B cell (primary cell): ENCODE measurements at regions of chrX and their contacts with region 1.

Region 1: GRCh38 chrX:10119399-10119990 is 37.3 kb upstream of the CLCN4 start:
- DNase-seq: peak; percentile 86
- ATAC-seq: peak; percentile 56
- H3K4me3 ChIP-seq: no peak overlapping the region
- H3K4me3 Mint-ChIP-seq: peak overlapping the region; percentile 65
- H3K27ac ChIP-seq: peak overlapping the region in 1 of 2 donors; percentile 55
- H3K27ac Mint-ChIP-seq: peak overlapping the region; percentile 96
- H3K4me1 ChIP-seq: peaks cover 70 to 90% of the 10 kb centered on the region in 2 donors
- H3K4me1 Mint-ChIP-seq: peaks cover 69% of the 10 kb centered on the region
- H3K27me3 ChIP-seq: no peaks in the 10 kb centered on the region
- H3K27me3 Mint-ChIP-seq: no peaks in the 10 kb centered on the region
- CTCF ChIP-seq: peak; percentile 98

Region 2: DNA sequence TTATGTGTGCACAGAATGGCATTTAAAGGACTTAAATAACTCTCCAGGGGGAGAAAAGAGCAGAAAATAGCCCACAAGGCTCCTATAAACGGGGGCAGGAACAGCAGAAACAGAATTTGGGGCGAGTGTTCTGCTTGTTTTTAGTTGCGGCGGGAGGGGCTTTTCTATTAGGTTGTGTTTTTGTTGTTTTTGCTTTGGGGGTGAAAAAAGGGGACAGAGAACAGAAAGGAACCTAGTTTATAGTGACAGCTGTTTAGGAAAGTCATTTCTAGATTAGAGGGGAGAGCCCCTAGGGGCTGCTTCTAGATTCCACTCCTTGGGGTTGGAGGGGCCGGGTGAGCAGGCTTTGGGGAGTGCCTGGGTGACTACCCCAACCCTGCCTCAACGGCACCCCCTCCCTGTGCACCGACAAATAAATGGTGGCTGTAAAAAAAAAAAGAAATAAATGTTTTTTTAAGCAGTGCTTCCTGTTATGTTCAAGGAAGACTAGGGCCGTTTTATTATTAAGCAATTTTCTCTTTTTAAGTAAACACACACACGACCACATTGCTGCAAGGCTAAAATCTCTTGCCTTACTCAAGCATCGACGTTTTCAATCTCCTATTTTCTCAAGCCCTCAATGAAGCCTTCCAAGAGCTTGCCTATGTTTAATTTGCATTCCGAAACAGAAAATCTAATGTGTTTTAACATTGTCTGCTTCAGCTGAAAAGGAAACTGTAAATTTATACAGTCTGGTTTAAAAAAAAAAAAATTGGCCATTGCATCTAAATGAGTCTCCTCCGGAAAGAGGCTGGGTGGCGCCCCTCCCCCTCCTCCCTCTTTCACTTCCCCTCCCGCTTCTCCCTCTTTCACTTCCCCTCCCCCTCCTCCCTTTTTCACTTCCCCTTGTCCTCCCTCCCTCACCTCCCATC is 777.9 kb before region 1 on chrX:
- CTCF ChIA-PET with region 1: interaction called, 3 read pairs
- POLR2A ChIA-PET with region 1: interaction called, 9 read pairs
- intact Hi-C with region 1: loop called (anchors 5 kb)
- DNase-seq: peak; percentile 90
- ATAC-seq: peak; percentile 61
- H3K4me3 ChIP-seq: peak overlapping the region; percentile 30 to 71 (median 47)
- H3K4me3 Mint-ChIP-seq: peak overlapping the region; percentile 84
- H3K27ac ChIP-seq: peak overlapping the region; percentile 83 to 93
- H3K27ac Mint-ChIP-seq: peak overlapping the region; percentile 92
- H3K4me1 ChIP-seq: peaks cover 29 to 33% of the 10 kb centered on the region in 2 donors
- H3K4me1 Mint-ChIP-seq: peaks cover 30% of the 10 kb centered on the region
- H3K27me3 ChIP-seq: no peaks in the 10 kb centered on the region
- H3K27me3 Mint-ChIP-seq: no peaks in the 10 kb centered on the region
- CTCF ChIP-seq: no peak

Region 3: DNA sequence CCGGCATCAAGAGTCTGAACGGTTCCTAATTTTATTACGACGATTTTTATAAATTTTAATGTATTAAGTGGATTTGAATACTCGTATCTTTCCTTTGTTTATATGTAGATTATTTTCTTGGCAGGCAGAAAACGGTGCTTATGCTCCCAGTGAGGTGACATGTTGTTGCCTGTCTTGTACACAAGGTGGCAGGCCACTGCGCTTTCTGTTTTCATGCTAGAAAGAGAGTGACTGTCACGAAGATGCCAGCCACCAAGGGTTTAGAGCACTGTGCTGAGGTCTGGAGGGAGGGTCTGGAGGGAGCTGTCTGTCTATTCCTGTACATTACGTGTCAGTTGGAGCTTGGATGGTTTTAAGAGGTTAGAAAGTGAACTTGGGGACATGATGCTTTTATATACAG is 245.5 kb before region 1 on chrX:
- CTCF ChIA-PET with region 1: interaction called, 7 read pairs
- POLR2A ChIA-PET with region 1: no interaction called
- intact Hi-C with region 1: loop called (anchors 1 kb)
- DNase-seq: peak; percentile 63
- ATAC-seq: peak; percentile 65
- H3K4me3 ChIP-seq: no peak overlapping the region
- H3K4me3 Mint-ChIP-seq: no peak overlapping the region
- H3K27ac ChIP-seq: no peak overlapping the region
- H3K27ac Mint-ChIP-seq: no peak overlapping the region
- H3K4me1 ChIP-seq: no peaks in the 10 kb centered on the region
- H3K4me1 Mint-ChIP-seq: peaks cover 2% of the 10 kb centered on the region
- H3K27me3 ChIP-seq: peaks cover 0 to 3% (median 0%) of the 10 kb centered on the region in 4 experiments
- H3K27me3 Mint-ChIP-seq: peaks cover 15% of the 10 kb centered on the region
- CTCF ChIP-seq: peak; percentile 61

Region 4: GRCh38 chrX:9988762-9989161 is 130.7 kb before region 1 on chrX:
- CTCF ChIA-PET with region 1: interaction called, 29 read pairs
- POLR2A ChIA-PET with region 1: no interaction called
- intact Hi-C with region 1: no loop called
- DNase-seq: peak; percentile 34
- ATAC-seq: no peak
- H3K4me3 ChIP-seq: no peak overlapping the region
- H3K4me3 Mint-ChIP-seq: no peak overlapping the region
- H3K27ac ChIP-seq: no peak overlapping the region
- H3K27ac Mint-ChIP-seq: no peak overlapping the region
- H3K4me1 ChIP-seq: peaks cover 4 to 11% of the 10 kb centered on the region in 2 donors
- H3K4me1 Mint-ChIP-seq: peaks cover 17% of the 10 kb centered on the region
- H3K27me3 ChIP-seq: no peaks in the 10 kb centered on the region
- H3K27me3 Mint-ChIP-seq: no peaks in the 10 kb centered on the region
- CTCF ChIP-seq: peak; percentile 46

Region 5: DNA sequence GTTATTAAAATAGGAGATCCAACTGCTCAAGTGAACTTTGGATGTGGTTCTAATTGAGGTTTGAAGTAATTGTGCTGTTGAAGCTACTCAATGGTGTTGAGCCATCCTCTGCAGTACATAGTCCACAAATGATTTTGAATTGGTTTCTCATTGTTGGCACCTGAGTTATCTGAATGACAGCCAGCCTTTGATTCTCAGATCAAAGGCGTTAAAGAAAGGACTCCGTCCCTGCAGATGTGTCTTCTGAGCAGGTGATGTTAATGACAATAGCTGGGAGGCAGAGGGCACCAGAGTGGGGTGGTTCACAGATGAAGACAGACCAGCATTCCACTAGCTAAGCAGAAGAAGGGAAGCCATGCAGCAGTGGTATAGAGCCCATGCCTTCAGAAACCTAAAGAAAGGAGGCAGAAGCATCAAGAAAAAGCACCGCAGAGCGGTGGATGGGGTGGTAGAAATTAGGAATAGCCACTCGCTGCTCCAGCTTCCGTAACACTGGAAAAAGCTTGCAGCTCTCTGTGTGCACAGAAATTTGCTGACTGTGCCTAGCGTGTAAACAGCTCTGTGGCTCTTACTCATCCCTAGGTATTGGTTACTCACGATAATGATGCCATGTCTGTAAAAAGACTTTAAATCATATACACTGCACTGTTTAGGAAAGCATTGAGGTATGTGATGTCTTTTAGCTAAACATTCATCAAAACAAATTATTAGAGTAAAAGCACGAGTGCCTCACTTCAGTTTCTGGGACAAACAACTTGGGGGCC is 41.9 kb before region 1 on chrX:
- CTCF ChIA-PET with region 1: interaction called, 47 read pairs
- POLR2A ChIA-PET with region 1: no interaction called
- intact Hi-C with region 1: loop called (anchors 2 kb)
- DNase-seq: no peak
- ATAC-seq: no peak
- H3K4me3 ChIP-seq: no peak overlapping the region
- H3K4me3 Mint-ChIP-seq: no peak overlapping the region
- H3K27ac ChIP-seq: no peak overlapping the region
- H3K27ac Mint-ChIP-seq: no peak overlapping the region
- H3K4me1 ChIP-seq: peaks cover 0 to 4% of the 10 kb centered on the region in 2 donors
- H3K4me1 Mint-ChIP-seq: peaks cover 13% of the 10 kb centered on the region
- H3K27me3 ChIP-seq: no peaks in the 10 kb centered on the region
- H3K27me3 Mint-ChIP-seq: no peaks in the 10 kb centered on the region
- CTCF ChIP-seq: no peak

Region 6: GRCh38 chrX:10156199-10157031 is 36.9 kb after region 1 on chrX and contains the start of gene CLCN4:
- CTCF ChIA-PET with region 1: interaction called, 31 read pairs
- POLR2A ChIA-PET with region 1: no interaction called
- intact Hi-C with region 1: loop called (anchors 2 kb)
- DNase-seq: peak; percentile 65
- ATAC-seq: peak; percentile 60
- H3K4me3 ChIP-seq: peak within 1 kb of the TSS; percentile 40 to 80 (median 59)
- H3K4me3 Mint-ChIP-seq: peak within 1 kb of the TSS; percentile 86
- H3K27ac ChIP-seq: peak within 1 kb of the TSS; percentile 83 to 91
- H3K27ac Mint-ChIP-seq: peak within 1 kb of the TSS; percentile 89
- H3K4me1 ChIP-seq: peaks cover 29 to 32% of the 10 kb centered on the region in 2 donors
- H3K4me1 Mint-ChIP-seq: peaks cover 35% of the 10 kb centered on the region
- H3K27me3 ChIP-seq: no peaks in the 10 kb centered on the region
- H3K27me3 Mint-ChIP-seq: no peaks in the 10 kb centered on the region
- CTCF ChIP-seq: no peak
- total RNA-seq, gene CLCN4: 7.7 and 10.0 TPM in 2 replicates

Region 7: GRCh38 chrX:10310511-10310910 is 191.0 kb after region 1 on chrX:
- CTCF ChIA-PET with region 1: no interaction called
- POLR2A ChIA-PET with region 1: no interaction called
- intact Hi-C with region 1: no loop called
- DNase-seq: no peak
- ATAC-seq: no peak
- H3K4me3 ChIP-seq: no peak overlapping the region
- H3K4me3 Mint-ChIP-seq: no peak overlapping the region
- H3K27ac ChIP-seq: no peak overlapping the region
- H3K27ac Mint-ChIP-seq: no peak overlapping the region
- H3K4me1 ChIP-seq: no peaks in the 10 kb centered on the region
- H3K4me1 Mint-ChIP-seq: no peaks in the 10 kb centered on the region
- H3K27me3 ChIP-seq: peaks cover 0 to 3% (median 0%) of the 10 kb centered on the region in 4 experiments
- H3K27me3 Mint-ChIP-seq: no peaks in the 10 kb centered on the region
- CTCF ChIP-seq: no peak